ENCODE measurements at regions of chr22 and their contacts with region 1.

Region 1: DNA sequence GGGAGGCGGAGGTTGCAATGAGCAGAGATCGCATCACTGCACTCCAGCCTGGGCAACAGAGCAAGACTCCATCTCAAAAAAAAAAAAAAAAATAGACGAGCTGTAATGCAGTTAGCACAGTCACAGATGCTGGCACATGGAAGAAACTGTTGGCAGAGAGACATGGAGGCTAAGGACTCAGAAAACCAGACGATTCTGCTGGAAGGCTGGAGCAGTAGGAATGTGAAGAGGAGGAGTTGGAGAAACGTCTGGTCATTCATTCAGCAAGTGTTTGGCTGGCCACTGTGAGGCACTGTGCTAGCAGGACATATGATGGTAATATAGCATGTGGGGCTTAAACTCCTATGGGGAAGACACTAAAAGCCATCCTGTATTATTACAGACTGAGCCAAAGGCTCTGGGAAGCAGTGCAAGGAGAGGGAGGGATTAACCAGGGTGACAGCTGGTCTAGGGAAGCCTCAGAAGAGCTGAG is 5.0 kb downstream of the UQCR10 start:
- DNase-seq: peak in 1 of 2 experiments; percentile 35
- H3K4me3 ChIP-seq: no peak overlapping the region
- H3K4me3 Mint-ChIP-seq: no peak overlapping the region
- H3K27ac Mint-ChIP-seq: peak overlapping the region; percentile 74
- H3K4me1 ChIP-seq: peaks cover 26% of the 10 kb centered on the region
- H3K4me1 Mint-ChIP-seq: peaks cover 16% of the 10 kb centered on the region
- H3K27me3 ChIP-seq: no peaks in the 10 kb centered on the region
- H3K27me3 Mint-ChIP-seq: no peaks in the 10 kb centered on the region
- CTCF ChIP-seq: peak; percentile 32 to 44

Region 2: GRCh38 chr22:29837780-29838598 is 65.8 kb after region 1 on chr22 and contains the start of gene ASCC2:
- CTCF ChIA-PET with region 1: interaction called, 10 read pairs
- POLR2A ChIA-PET with region 1: no interaction called
- intact Hi-C with region 1: no loop called
- DNase-seq: peak; percentile 98
- H3K4me3 ChIP-seq: peak within 1 kb of the TSS; percentile 97
- H3K4me3 Mint-ChIP-seq: peak within 1 kb of the TSS; percentile 83
- H3K27ac Mint-ChIP-seq: peak within 1 kb of the TSS; percentile 69
- H3K4me1 ChIP-seq: peaks cover 5% of the 10 kb centered on the region; the same call in 1 of the 2 replicates
- H3K4me1 Mint-ChIP-seq: peaks cover 10% of the 10 kb centered on the region
- H3K27me3 ChIP-seq: no peaks in the 10 kb centered on the region
- H3K27me3 Mint-ChIP-seq: no peaks in the 10 kb centered on the region
- CTCF ChIP-seq: no peak
- total RNA-seq, gene ASCC2: 61.4 and 68.8 TPM in 2 replicates